ENCODE measurements at regions of chr20 and their contacts with region 1.

Region 1: DNA sequence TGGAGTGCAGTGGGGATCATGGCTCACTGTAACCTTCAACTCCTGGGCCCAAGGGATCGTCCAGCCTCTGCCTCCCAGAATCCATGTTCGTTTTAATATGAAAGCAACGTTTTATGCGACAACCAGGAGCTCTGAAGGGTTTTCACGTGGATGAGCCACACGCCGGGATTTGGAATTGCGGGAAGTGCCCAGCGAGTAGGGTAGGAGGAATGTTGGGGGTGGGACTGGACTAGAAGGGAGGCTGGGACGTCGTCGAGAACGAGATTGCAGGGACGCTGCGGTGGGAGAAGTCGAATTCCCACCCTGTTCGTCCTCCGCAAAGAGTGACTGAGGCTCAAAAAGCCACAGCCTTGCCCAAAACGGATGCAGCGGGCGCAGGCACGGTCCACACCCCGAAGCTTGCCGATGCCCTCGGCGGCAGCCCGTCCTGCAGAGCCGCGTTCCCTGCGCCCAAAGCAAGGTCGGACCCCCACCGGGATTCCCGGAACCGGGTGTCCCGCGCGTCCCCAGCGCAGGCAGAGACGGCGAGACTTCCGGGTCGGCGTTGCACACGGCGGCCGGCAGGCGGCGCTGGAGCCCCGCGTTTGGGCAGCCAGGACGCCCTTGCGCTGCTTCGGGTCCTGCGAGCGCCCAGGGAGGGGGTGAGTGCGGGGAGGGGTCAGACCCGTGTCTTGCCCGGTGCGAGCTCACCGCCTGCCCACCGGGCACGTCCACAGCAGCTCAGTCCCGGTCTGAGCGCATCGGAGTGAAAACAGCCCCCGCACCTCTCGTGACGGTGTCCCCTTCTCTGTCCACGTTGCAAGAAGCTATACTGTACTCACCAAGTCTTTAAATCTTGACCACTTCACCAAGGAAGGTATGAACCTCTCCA is 87.8 kb downstream of the DHX35 start:
- DNase-seq: peak; percentile 87
- ATAC-seq: peak; percentile 89
- H3K4me3 ChIP-seq: peak overlapping the region; percentile 57 to 86 (median 68)
- H3K4me3 Mint-ChIP-seq: peak overlapping the region; percentile 88
- H3K27ac ChIP-seq: peak overlapping the region in 1 of 2 donors; percentile 67
- H3K27ac Mint-ChIP-seq: peak overlapping the region; percentile 46
- H3K4me1 ChIP-seq: peaks cover 8 to 12% of the 10 kb centered on the region in 2 donors
- H3K4me1 Mint-ChIP-seq: peaks cover 10% of the 10 kb centered on the region
- H3K27me3 ChIP-seq: no peaks in the 10 kb centered on the region
- H3K27me3 Mint-ChIP-seq: peaks cover 10% of the 10 kb centered on the region
- CTCF ChIP-seq: peak; percentile 99

Region 2: DNA sequence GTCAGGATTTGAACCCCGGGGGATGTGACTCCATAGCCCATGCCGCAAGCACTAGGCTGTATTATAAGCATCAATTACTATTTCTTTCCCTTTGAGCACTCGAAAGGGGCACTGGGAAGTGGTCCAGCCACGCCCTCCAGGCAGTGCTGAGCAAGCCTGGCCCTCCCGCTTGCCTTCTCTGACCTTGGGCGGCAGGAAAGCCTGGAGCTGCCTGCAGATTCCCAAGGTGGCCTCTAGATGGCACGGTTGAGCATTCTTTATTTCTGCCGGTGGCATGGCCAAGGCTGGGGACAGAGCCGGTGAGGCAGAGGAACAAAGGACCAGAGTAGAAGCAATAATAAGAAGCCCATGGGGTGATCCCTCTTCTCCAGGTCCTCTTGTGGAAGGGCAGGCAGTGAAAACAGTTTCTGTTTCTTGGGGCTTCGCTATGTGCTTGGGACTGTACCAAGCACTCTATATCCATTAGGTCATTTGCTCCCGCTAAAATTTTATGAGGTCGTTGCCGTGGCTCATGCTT is 416.3 kb before region 1 on chr20:
- CTCF ChIA-PET with region 1: interaction called, 20 read pairs
- POLR2A ChIA-PET with region 1: no interaction called
- intact Hi-C with region 1: loop called (anchors 1 kb)
- DNase-seq: peak; percentile 70
- ATAC-seq: peak; percentile 90
- H3K4me3 ChIP-seq: no peak overlapping the region
- H3K4me3 Mint-ChIP-seq: no peak overlapping the region
- H3K27ac ChIP-seq: no peak overlapping the region
- H3K27ac Mint-ChIP-seq: no peak overlapping the region
- H3K4me1 ChIP-seq: peaks cover 3 to 5% of the 10 kb centered on the region in 2 donors
- H3K4me1 Mint-ChIP-seq: peaks cover 5% of the 10 kb centered on the region
- H3K27me3 ChIP-seq: peaks cover 0 to 16% (median 4%) of the 10 kb centered on the region in 4 experiments
- H3K27me3 Mint-ChIP-seq: peaks cover 20% of the 10 kb centered on the region
- CTCF ChIP-seq: peak; percentile 99

Region 3: DNA sequence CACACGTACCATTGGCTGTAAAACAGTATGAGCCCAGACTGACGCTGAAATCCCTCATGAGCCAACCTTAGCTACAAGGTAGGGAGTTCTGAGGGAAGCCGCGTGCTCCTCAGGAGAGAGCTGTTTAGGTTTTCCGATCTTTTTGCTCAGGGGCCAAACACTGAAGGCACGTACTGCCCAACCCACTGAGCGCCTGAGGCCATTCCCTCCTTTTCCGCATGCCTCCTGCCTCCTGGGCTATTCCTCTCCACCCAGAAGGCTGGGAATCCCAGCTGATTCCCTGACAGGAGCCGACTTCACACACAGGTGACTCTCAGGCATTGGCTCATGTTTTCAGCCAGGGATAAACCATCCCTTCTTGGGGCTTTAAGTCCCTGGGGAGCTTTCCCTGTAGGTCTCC is 129.1 kb before region 1 on chr20:
- CTCF ChIA-PET with region 1: interaction called, 12 read pairs
- POLR2A ChIA-PET with region 1: no interaction called
- intact Hi-C with region 1: loop called (anchors 1 kb)
- DNase-seq: no peak
- ATAC-seq: no peak
- H3K4me3 ChIP-seq: no peak overlapping the region
- H3K4me3 Mint-ChIP-seq: no peak overlapping the region
- H3K27ac ChIP-seq: no peak overlapping the region
- H3K27ac Mint-ChIP-seq: no peak overlapping the region
- H3K4me1 ChIP-seq: peaks cover 0 to 3% of the 10 kb centered on the region in 2 donors
- H3K4me1 Mint-ChIP-seq: peaks cover 8% of the 10 kb centered on the region
- H3K27me3 ChIP-seq: no peaks in the 10 kb centered on the region
- H3K27me3 Mint-ChIP-seq: no peaks in the 10 kb centered on the region
- CTCF ChIP-seq: no peak

Region 4: DNA sequence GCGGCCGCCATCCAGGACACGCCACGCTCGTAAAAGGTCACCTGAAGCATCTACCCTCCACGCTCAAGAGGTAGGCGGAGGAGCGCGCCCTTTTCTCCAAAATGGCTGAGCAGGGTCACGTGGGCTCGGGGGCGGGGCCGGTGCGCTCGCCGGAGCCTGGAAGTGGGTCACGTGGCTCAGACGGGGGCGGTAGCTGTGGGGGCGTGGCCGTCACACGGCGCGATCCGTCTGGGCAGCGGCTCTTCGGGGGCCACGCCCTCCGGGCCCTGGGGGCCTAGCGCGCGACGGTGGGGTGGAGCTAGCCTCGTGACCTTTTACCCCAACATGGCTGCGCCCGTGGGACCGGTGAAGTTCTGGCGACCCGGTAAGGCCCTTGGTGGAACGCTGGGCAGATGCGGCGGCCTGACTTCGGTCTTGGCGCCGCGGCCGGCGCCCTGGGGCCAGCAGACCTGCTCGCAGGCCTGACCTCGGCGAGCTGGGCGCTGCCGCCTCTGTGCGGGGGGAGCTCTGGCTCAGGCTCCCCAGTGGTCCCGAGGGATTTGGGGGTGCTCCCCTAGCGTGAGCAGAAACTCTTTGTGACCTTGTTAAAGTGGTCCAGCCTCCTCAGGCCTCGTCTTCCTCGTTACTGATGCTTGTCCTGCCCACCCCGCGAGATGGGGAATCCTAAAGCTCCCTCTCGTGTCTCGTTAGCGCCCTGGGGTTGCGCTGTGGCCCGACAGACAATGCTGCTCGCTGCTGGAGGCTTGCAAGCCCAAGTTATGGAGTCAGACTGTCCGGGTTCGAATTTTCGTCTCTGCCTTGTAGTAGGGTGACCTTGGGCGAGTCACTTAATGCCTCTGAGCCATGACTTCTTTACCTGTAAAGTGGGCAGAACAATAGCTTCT is 87.6 kb before region 1 on chr20 and contains the start of gene DHX35:
- CTCF ChIA-PET with region 1: interaction called, 14 read pairs
- POLR2A ChIA-PET with region 1: no interaction called
- intact Hi-C with region 1: no loop called
- DNase-seq: peak; percentile 99
- ATAC-seq: peak; percentile 95
- H3K4me3 ChIP-seq: peak within 1 kb of the TSS; percentile 76 to 96 (median 94)
- H3K4me3 Mint-ChIP-seq: peak within 1 kb of the TSS; percentile 98
- H3K27ac ChIP-seq: peak within 1 kb of the TSS; percentile 74 to 93
- H3K27ac Mint-ChIP-seq: peak within 1 kb of the TSS; percentile 99
- H3K4me1 ChIP-seq: peaks cover 14% of the 10 kb centered on the region in 2 donors
- H3K4me1 Mint-ChIP-seq: peaks cover 20% of the 10 kb centered on the region
- H3K27me3 ChIP-seq: no peaks in the 10 kb centered on the region
- H3K27me3 Mint-ChIP-seq: no peaks in the 10 kb centered on the region
- CTCF ChIP-seq: peak; percentile 63
- total RNA-seq, gene DHX35: 7.5 and 8.4 TPM in 2 replicates

Region 5: GRCh38 chr20:39066471-39067242 is 16.7 kb after region 1 on chr20:
- CTCF ChIA-PET with region 1: interaction called, 37 read pairs
- POLR2A ChIA-PET with region 1: no interaction called
- intact Hi-C with region 1: no loop called
- DNase-seq: no peak
- ATAC-seq: no peak
- H3K4me3 ChIP-seq: no peak overlapping the region
- H3K4me3 Mint-ChIP-seq: no peak overlapping the region
- H3K27ac ChIP-seq: no peak overlapping the region
- H3K27ac Mint-ChIP-seq: no peak overlapping the region
- H3K4me1 ChIP-seq: no peaks in the 10 kb centered on the region
- H3K4me1 Mint-ChIP-seq: no peaks in the 10 kb centered on the region
- H3K27me3 ChIP-seq: peaks cover 0 to 9% (median 0%) of the 10 kb centered on the region in 4 experiments
- H3K27me3 Mint-ChIP-seq: peaks cover 33% of the 10 kb centered on the region
- CTCF ChIP-seq: no peak

Measured in B cell (primary cell).